ENCODE measurements at regions of chr1 and their contacts with region 1.

Region 1: DNA sequence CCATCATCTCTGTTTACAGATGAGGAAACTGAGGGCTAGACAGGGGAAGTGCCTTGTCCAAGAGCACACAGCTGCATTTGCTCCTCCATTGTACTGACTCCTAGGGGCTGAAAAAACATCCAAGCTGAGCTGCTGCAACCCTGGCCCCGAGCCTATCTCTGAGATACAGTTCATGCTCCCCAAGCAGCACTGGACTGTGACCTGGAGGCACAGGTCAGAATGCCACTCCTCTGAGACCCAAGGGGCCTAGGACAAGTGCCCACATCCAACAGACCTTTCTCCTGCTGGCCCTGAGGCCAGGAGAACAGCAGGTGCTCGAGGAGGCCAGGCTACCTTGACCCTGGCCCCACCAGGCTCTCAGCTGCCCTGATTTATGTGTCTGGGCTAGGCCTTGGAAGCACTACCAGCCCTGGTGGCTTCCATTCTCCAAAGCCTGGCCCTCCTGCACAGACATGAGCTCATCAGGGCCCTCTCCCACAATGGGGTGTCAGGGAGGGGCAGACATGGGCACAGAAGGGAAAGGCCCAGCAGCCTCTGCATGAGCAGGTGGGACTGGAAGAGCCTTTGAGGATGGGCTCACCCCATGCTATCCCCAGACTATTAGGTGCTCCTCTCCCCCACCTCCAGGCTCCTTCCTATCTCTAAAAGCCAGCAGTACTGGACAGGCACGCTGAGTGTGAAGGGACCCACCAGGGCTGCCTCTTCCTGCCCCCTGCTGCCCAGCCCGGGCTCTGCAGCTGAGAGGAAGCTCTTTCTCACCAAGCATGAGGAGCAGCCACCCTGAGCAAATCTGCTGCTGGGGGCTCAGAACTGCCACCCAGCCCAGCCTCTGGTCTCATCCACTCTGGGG is 18.8 kb downstream of the ADGRB2 start:
- DNase-seq: peak; percentile 80
- ATAC-seq: peak; percentile 89
- H3K4me3 Mint-ChIP-seq: no peak overlapping the region
- H3K27ac Mint-ChIP-seq: no peak overlapping the region
- H3K4me1 Mint-ChIP-seq: peaks cover 32% of the 10 kb centered on the region
- H3K27me3 Mint-ChIP-seq: no peaks in the 10 kb centered on the region

Region 2: GRCh38 chr1:31663622-31664452 is 81.5 kb before region 1 on chr1:
- CTCF ChIA-PET with region 1: interaction called, 19 read pairs
- POLR2A ChIA-PET with region 1: no interaction called
- DNase-seq: peak; percentile 59
- ATAC-seq: peak; percentile 38
- H3K4me3 Mint-ChIP-seq: no peak overlapping the region
- H3K27ac Mint-ChIP-seq: no peak overlapping the region
- H3K4me1 Mint-ChIP-seq: no peaks in the 10 kb centered on the region
- H3K27me3 Mint-ChIP-seq: no peaks in the 10 kb centered on the region

Region 3: GRCh38 chr1:31762726-31763670 is 17.7 kb after region 1 on chr1:
- CTCF ChIA-PET with region 1: interaction called, 12 read pairs
- POLR2A ChIA-PET with region 1: no interaction called
- DNase-seq: peak; percentile 55
- ATAC-seq: peak; percentile 38
- H3K4me3 Mint-ChIP-seq: peak overlapping the region; percentile 66
- H3K27ac Mint-ChIP-seq: no peak overlapping the region
- H3K4me1 Mint-ChIP-seq: peaks cover 29% of the 10 kb centered on the region
- H3K27me3 Mint-ChIP-seq: peaks cover 61% of the 10 kb centered on the region